ENCODE measurements at regions of chr2 and their contacts with region 1.

Region 1: DNA sequence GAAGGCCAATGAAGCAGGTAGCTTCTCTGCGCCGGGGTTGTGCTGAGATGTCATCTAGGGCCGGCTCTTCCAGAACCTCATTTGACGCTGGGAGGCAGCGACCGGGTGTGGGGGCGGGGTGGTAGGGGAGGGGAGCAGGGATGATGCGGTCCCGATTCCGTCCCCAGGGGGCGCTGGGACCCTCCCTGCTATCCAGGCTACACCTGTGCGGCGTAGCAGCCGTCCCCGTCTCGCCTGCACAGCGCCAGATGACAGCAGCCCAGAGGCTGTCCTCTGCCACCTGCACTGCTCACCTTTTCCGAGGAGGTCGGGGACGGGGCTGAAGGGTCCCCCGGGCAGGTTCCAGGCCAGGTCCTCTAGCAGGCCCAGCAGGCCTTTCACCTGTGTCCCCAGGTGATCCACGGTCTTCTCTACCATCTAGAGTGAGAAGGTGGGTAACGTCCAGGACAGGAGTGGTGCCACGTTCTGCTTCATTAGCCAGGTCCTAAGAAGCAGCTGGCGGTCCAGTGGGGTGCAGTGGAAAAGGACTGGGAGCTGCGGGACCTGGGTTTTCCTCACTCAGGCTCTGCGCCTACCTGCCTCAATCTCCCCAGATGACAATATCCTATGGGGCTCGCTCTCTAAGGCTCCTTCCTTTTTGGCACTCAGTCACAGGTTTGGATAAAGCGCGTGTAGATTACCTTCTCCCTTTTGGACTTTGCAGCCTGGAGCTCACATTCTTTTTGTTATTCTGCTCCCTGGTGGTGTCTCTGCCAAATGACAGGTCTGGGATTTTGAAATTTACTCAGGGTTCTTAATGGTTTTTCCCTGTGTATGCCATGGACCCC is 56.0 kb upstream of the RAB6C start:
- ATAC-seq: peak; percentile 66 to 93 (median 89)
- H3K4me3 ChIP-seq: peak overlapping the region; percentile 17 to 32 (median 21)
- H3K27ac ChIP-seq: no peak overlapping the region
- H3K4me1 ChIP-seq: peaks cover 2 to 4% of the 10 kb centered on the region in 2 donors

Region 2: GRCh38 chr2:128321784-128322714 is 1601.4 kb before region 1 on chr2:
- in situ Hi-C with region 1: loop called in 1 of 9 experiments (anchors 25 kb)
- ATAC-seq: peak; percentile 37 to 55 (median 46)
- H3K4me3 ChIP-seq: peak overlapping the region; percentile 38 to 62 (median 42)
- H3K27ac ChIP-seq: peak overlapping the region; percentile 35 to 51
- H3K4me1 ChIP-seq: peaks cover 23 to 40% of the 10 kb centered on the region in 2 donors

Measured in motor neuron (in vitro differentiated cells).